ENCODE measurements at regions of chr9 and their contacts with region 1.

Region 1: DNA sequence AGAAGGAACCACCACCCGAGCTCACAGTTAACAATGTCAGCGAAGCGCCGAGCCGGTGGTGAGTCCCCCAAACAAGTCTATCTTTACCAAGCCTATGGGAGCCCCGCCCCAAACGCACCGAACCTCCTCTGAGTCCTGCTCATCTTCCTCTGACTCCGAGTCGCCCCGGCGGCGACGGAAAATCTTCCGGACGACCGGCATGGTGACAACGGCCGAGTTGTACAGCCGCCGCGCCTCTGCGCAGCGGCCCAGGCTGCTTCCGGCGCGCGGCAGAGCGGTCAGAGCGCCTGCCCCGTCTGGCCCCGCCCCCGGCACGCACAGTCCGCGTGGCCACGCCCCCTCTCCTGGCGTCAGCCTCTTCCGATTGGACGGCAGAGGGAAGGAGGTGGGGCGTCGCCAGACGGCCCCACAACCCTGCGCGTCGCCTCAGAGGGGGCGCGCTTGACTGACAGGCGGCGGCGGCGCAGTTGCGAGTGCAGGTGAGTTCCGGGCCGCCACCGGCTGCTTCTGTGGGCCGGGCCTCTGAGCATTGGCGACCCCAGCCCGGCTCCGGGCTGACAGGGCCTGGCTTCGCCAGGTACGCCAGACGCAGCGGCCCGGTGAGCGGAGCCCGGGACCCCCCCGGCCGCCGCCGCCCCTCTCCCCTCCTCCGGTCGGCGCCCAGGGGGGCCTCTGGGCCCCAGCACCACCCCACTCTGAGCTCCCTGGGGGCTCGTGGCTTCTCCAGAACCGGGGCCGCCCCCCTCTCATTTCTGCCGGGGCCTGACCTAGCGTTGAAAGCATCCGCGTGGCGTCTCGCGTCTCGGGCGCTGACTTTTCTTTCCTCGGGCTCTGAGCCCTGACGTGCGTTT is at the starts of genes C9orf78 and USP20:
- DNase-seq: peak; percentile 99
- ATAC-seq: peak; percentile 95
- H3K4me3 ChIP-seq: peak within 1 kb of the TSS; percentile 75 to 98 (median 85)
- H3K4me3 Mint-ChIP-seq: peak within 1 kb of the TSS; percentile 98
- H3K27ac ChIP-seq: peak within 1 kb of the TSS; percentile 85 to 92
- H3K27ac Mint-ChIP-seq: peak within 1 kb of the TSS; percentile 99
- H3K4me1 ChIP-seq: peaks cover 22 to 35% of the 10 kb centered on the region in 2 donors
- H3K4me1 Mint-ChIP-seq: peaks cover 51% of the 10 kb centered on the region
- H3K27me3 ChIP-seq: no peaks in the 10 kb centered on the region
- H3K27me3 Mint-ChIP-seq: no peaks in the 10 kb centered on the region
- CTCF ChIP-seq: no peak
- total RNA-seq, gene C9orf78: 42.8 and 43.6 TPM in 2 replicates
- total RNA-seq, gene USP20: 49.5 and 52.2 TPM in 2 replicates

Region 2: GRCh38 chr9:129641746-129642513 is 193.3 kb before region 1 on chr9 and contains the start of gene ASB6:
- CTCF ChIA-PET with region 1: no interaction called
- POLR2A ChIA-PET with region 1: no interaction called
- intact Hi-C with region 1: loop called (anchors 1 kb)
- DNase-seq: peak; percentile 96
- ATAC-seq: peak; percentile 95
- H3K4me3 ChIP-seq: peak within 1 kb of the TSS; percentile 61 to 91 (median 84)
- H3K4me3 Mint-ChIP-seq: peak within 1 kb of the TSS; percentile 87
- H3K27ac ChIP-seq: peak within 1 kb of the TSS; percentile 54 to 86
- H3K27ac Mint-ChIP-seq: peak within 1 kb of the TSS; percentile 91
- H3K4me1 ChIP-seq: peaks cover 12 to 17% of the 10 kb centered on the region in 2 donors
- H3K4me1 Mint-ChIP-seq: peaks cover 26% of the 10 kb centered on the region
- H3K27me3 ChIP-seq: no peaks in the 10 kb centered on the region
- H3K27me3 Mint-ChIP-seq: no peaks in the 10 kb centered on the region
- CTCF ChIP-seq: peak; percentile 100
- total RNA-seq, gene ASB6: 24.8 and 27.7 TPM in 2 replicates

Region 3: GRCh38 chr9:129802851-129803675 is 32.2 kb before region 1 on chr9 and contains the start of gene TOR1B:
- CTCF ChIA-PET with region 1: interaction called, 3 read pairs
- POLR2A ChIA-PET with region 1: no interaction called
- intact Hi-C with region 1: loop called (anchors 1 kb)
- DNase-seq: peak; percentile 98
- ATAC-seq: peak; percentile 94
- H3K4me3 ChIP-seq: peak within 1 kb of the TSS; percentile 41 to 96 (median 76)
- H3K4me3 Mint-ChIP-seq: peak within 1 kb of the TSS; percentile 96
- H3K27ac ChIP-seq: peak within 1 kb of the TSS; percentile 71 to 79
- H3K27ac Mint-ChIP-seq: peak within 1 kb of the TSS; percentile 95
- H3K4me1 ChIP-seq: peaks cover 6 to 13% of the 10 kb centered on the region in 2 donors
- H3K4me1 Mint-ChIP-seq: peaks cover 20% of the 10 kb centered on the region
- H3K27me3 ChIP-seq: no peaks in the 10 kb centered on the region
- H3K27me3 Mint-ChIP-seq: no peaks in the 10 kb centered on the region
- CTCF ChIP-seq: no peak
- total RNA-seq, gene TOR1B: 17.4 and 18.9 TPM in 2 replicates

Region 4: GRCh38 chr9:129823935-129824601 is 11.2 kb before region 1 on chr9 and contains the start of gene TOR1A:
- CTCF ChIA-PET with region 1: interaction called, 5 read pairs
- POLR2A ChIA-PET with region 1: interaction called, 4 read pairs
- intact Hi-C with region 1: loop called (anchors 1 kb)
- DNase-seq: peak; percentile 95
- ATAC-seq: peak; percentile 92
- H3K4me3 ChIP-seq: peak within 1 kb of the TSS in 4 of 5 experiments; percentile 49 to 83 (median 76)
- H3K4me3 Mint-ChIP-seq: peak within 1 kb of the TSS; percentile 86
- H3K27ac ChIP-seq: peak within 1 kb of the TSS in 1 of 2 donors; percentile 68
- H3K27ac Mint-ChIP-seq: peak within 1 kb of the TSS; percentile 81
- H3K4me1 ChIP-seq: peaks cover 7 to 8% of the 10 kb centered on the region in 2 donors
- H3K4me1 Mint-ChIP-seq: peaks cover 16% of the 10 kb centered on the region
- H3K27me3 ChIP-seq: no peaks in the 10 kb centered on the region
- H3K27me3 Mint-ChIP-seq: no peaks in the 10 kb centered on the region
- CTCF ChIP-seq: no peak
- total RNA-seq, gene TOR1A: 30.3 and 35.3 TPM in 2 replicates

Region 5: DNA sequence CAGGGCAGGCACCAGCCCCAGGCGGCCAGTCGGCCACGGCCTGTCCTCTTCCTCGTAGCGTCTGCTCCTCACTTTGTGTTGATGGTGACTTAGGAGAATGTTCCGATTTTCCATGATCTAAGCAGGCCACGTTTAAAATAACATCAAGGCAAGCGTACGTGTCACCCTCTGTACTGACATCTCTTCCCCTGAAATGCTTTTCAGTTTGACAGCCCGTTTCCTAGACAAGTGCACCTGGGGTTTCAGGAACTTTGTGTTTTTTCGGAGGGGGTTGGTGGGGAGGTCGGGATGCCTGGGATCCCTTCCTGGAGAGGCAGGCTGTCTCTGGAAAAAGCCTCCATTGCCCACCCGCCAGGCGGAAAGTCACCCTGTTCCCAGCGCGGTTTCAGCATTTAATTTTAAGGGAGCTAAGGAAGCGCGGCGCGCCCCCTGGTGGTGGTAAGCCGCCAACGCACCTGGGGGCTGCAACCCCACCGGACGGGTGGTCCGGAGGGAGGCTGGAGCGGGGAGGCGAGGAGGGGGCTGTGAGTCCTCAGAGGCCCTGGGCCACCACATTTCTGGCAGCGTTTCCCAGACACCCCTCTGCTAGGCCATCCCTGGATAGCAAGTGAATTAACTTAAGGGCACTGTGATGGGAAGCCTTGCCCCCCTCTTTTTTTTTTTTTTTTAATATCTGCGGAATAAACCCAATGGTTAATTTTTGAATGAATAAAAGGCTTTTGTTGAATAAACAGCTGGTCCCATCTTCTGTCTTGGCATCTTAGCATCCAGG is 400.8 kb after region 1 on chr9:
- CTCF ChIA-PET with region 1: no interaction called
- POLR2A ChIA-PET with region 1: no interaction called
- intact Hi-C with region 1: loop called (anchors 5 kb)
- DNase-seq: peak; percentile 79
- ATAC-seq: no peak
- H3K4me3 ChIP-seq: no peak overlapping the region
- H3K4me3 Mint-ChIP-seq: peak overlapping the region; percentile 23
- H3K27ac ChIP-seq: no peak overlapping the region
- H3K27ac Mint-ChIP-seq: peak overlapping the region; percentile 15
- H3K4me1 ChIP-seq: peaks cover 18 to 28% of the 10 kb centered on the region in 2 donors
- H3K4me1 Mint-ChIP-seq: peaks cover 28% of the 10 kb centered on the region
- H3K27me3 ChIP-seq: peaks cover 0 to 12% (median 0%) of the 10 kb centered on the region in 4 experiments
- H3K27me3 Mint-ChIP-seq: peaks cover 3% of the 10 kb centered on the region
- CTCF ChIP-seq: peak; percentile 97

Region 6: GRCh38 chr9:131125128-131126058 is 1290.1 kb after region 1 on chr9 and contains the start of gene NUP214:
- CTCF ChIA-PET with region 1: no interaction called
- POLR2A ChIA-PET with region 1: no interaction called
- intact Hi-C with region 1: loop called (anchors 5 kb)
- DNase-seq: peak; percentile 99
- ATAC-seq: peak; percentile 99
- H3K4me3 ChIP-seq: peak within 1 kb of the TSS; percentile 76 to 89 (median 86)
- H3K4me3 Mint-ChIP-seq: peak within 1 kb of the TSS; percentile 99
- H3K27ac ChIP-seq: peak within 1 kb of the TSS; percentile 73 to 88
- H3K27ac Mint-ChIP-seq: peak within 1 kb of the TSS; percentile 100
- H3K4me1 ChIP-seq: peaks cover 14 to 17% of the 10 kb centered on the region in 2 donors
- H3K4me1 Mint-ChIP-seq: peaks cover 27% of the 10 kb centered on the region
- H3K27me3 ChIP-seq: no peaks in the 10 kb centered on the region
- H3K27me3 Mint-ChIP-seq: peaks cover 3% of the 10 kb centered on the region
- CTCF ChIP-seq: no peak
- total RNA-seq, gene NUP214: 94.6 and 103 TPM in 2 replicates